ENCODE measurements at regions of chr4 and their contacts with region 1.

Region 1: GRCh38 chr4:42519803-42520417 is 122.6 kb downstream of the SHISA3 start:
- DNase-seq: peak; percentile 57
- H3K4me3 Mint-ChIP-seq: no peak overlapping the region
- H3K27ac Mint-ChIP-seq: no peak overlapping the region
- H3K4me1 Mint-ChIP-seq: peaks cover 3% of the 10 kb centered on the region
- H3K27me3 Mint-ChIP-seq: no peaks in the 10 kb centered on the region

Region 2: GRCh38 chr4:42282081-42282901 is 237.6 kb before region 1 on chr4:
- CTCF ChIA-PET with region 1: interaction called, 60 read pairs
- DNase-seq: peak; percentile 33
- H3K4me3 Mint-ChIP-seq: no peak overlapping the region
- H3K27ac Mint-ChIP-seq: no peak overlapping the region
- H3K4me1 Mint-ChIP-seq: no peaks in the 10 kb centered on the region
- H3K27me3 Mint-ChIP-seq: peaks cover 8% of the 10 kb centered on the region

Region 3: DNA sequence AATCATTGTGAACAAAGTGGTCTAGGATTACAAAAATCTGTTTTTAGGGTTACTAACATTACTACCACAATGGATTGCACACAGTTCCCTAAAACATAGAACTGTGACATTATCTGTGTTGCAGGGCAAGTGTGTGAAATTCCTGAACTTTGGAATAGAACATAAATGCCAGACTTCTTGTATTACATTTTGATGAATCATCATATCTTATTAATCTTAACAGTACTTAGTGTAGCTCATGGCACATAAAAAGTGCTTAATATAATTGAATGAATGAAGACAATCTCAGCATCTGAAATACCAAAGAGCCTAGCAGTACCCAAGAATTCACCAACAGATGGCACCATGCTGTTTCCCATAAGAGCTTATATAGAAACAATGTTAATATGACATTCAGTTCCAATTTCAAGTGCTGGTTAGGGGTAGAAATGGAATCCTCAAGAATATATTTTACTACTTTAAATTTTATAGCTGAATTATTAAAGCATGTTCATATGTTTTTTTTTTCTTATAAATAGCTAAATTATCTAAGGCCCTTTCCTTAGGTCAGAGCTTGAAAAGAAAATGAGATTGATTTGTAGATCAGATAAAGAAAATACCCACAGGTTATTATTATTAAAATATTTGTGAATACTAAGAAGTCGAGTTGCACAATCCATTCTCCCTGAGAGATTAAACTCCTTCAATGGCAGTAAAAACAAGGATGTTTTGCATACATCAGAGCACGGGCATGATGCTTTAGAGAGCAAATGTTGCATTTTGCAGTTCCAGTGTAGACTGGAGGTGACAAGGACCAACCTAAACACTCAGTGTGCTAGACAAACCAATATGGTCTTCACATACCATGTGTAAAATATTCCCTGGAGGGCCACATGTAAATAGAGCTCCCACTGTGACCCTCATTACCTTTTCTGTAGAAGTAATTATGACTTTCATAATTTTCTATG is 148.3 kb before region 1 on chr4:
- CTCF ChIA-PET with region 1: interaction called, 59 read pairs
- DNase-seq: peak; percentile 26
- H3K4me3 Mint-ChIP-seq: no peak overlapping the region
- H3K27ac Mint-ChIP-seq: no peak overlapping the region
- H3K4me1 Mint-ChIP-seq: no peaks in the 10 kb centered on the region
- H3K27me3 Mint-ChIP-seq: no peaks in the 10 kb centered on the region

Measured in activated naive CD4-positive, alpha-beta T cell treated with anti-CD3 and anti-CD28 coated beads, Interleukin-2, amount 10 ng/mL, durations not matched to agents 7 days and 5 days (primary cell).